Vagina (tissue), 2 donors: ENCODE measurements at regions of chr12 and their contacts with region 1.

Region 1: DNA sequence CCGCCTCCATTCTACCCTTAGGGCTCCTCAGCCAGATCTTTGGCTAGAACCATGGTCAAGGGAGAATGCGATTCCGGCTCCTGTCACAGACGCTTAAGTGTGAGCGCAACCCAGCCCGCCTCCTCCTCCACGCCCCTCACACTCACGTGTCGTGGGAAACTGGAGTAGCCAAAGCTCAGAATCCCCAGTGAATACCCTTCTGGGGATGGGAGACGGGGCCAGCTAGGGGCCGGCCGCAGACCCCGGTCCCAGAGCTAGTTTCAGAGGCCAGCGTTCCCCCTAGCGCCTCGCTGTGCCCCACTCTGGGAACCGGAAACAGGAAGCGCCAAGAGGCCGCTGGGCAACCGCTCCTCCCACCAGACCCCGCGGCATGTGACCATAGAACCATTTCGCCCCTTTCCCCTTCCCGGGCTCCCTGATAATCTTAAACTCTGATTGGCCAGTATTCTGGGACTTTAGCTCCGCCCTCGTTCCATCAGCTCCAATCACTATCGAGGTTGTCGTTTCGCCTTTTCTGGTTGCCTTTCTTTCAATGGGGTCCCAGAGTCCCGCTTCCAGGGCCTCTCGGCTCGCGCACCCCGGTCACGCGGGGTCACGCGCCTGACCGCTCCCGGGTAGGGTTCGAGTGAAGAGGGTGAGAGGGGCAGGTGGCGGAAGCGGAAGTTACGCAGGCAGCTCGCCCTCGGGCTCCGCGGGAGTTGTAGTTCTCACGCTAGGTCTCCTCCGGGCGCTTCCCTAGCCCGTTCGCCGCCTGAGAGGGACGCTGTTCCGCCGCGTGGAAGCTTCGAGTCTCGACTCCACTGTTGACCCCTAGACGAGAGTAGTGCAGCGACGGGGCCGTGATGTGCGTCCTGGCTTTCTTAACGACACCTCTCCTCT is at the start of gene M6PR:
- DNase-seq: peak; percentile 97 to 98
- H3K4me3 ChIP-seq: peak within 1 kb of the TSS; percentile 63 to 64
- H3K27ac ChIP-seq: peak within 1 kb of the TSS; percentile 97
- H3K4me1 ChIP-seq: peaks cover 32% of the 10 kb centered on the region
- H3K27me3 ChIP-seq: no peaks in the 10 kb centered on the region
- CTCF ChIP-seq: peak in 1 of 3 experiments; percentile 26
- POLR2A ChIP-seq: peak in 1 of 2 donors; percentile 78
- total RNA-seq, gene M6PR: 98.0 TPM

Region 2: DNA sequence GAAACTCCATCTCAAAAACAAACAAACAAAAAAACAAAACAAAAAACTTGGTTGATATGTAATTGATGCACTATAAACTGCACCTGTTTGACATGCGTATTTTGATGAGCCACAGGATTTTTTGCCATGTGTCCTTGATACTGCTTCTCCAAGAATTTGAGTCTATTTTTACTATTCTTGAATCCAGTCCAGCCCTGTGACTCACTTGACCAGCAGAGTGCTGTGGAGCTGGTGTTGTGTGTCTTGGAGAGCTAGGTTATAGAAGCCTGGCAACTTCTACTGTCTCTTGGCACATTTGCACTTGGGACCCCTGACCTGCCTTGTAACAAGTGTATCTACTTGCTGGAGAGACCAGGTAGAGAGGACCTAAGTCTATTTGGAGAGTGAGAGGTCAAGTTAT is 91.7 kb after region 1 on chr12:
- intact Hi-C with region 1: loop called (anchors 2 kb)
- DNase-seq: no peak
- H3K4me3 ChIP-seq: no peak overlapping the region
- H3K27ac ChIP-seq: no peak overlapping the region
- H3K4me1 ChIP-seq: no peaks in the 10 kb centered on the region
- H3K27me3 ChIP-seq: no peaks in the 10 kb centered on the region
- CTCF ChIP-seq: no peak
- POLR2A ChIP-seq: no peak